ENCODE measurements at regions of chr5 and their contacts with region 1.

Region 1: DNA sequence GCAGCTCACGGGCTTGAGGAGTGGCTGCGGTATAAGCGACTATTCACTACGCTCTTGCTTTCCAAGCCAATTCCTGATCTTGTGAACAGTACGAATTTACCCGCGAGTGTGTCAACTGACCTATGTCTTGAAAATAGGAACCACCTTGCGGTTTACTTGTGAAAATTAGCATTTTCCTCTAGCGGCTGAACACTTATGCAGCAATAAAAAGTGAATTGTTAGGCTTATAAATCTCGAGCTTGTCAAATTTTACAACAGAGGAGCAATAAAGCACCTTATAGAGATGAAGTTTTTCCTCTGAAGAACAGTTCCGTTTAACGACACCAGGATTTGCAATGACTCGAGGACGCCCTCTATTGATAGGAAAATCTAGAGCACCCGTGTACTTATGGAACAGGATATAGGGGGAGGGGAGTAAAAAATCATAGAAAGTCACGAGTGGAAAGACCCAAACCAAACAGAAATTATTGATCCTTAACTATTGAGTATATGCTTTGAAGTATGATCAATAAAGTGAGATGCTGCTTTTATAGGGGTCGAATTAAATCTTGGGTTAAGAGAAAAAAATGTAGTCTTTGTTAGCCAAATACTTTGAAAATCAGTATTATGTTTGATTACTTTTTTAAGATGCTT is 2.0 kb upstream of the RGMB start:
- DNase-seq: peak in 1 of 2 donors; percentile 52
- H3K4me3 ChIP-seq: peak overlapping the region; percentile 55 to 89 (median 73)
- H3K27ac ChIP-seq: peak overlapping the region; percentile 79 to 82
- H3K4me1 ChIP-seq: peaks cover 0 to 13% of the 10 kb centered on the region in 2 donors
- H3K27me3 ChIP-seq: no peaks in the 10 kb centered on the region
- CTCF ChIP-seq: peak; percentile 88 to 92 (median 88)
- POLR2A ChIP-seq: no peak

Region 2: GRCh38 chr5:98750693-98751092 is 20.8 kb before region 1 on chr5:
- intact Hi-C with region 1: no loop called
- DNase-seq: no peak
- H3K4me3 ChIP-seq: no peak overlapping the region
- H3K27ac ChIP-seq: no peak overlapping the region
- H3K4me1 ChIP-seq: no peaks in the 10 kb centered on the region
- H3K27me3 ChIP-seq: no peaks in the 10 kb centered on the region
- CTCF ChIP-seq: peak in 1 of 3 donors; percentile 9
- POLR2A ChIP-seq: no peak

Region 3: DNA sequence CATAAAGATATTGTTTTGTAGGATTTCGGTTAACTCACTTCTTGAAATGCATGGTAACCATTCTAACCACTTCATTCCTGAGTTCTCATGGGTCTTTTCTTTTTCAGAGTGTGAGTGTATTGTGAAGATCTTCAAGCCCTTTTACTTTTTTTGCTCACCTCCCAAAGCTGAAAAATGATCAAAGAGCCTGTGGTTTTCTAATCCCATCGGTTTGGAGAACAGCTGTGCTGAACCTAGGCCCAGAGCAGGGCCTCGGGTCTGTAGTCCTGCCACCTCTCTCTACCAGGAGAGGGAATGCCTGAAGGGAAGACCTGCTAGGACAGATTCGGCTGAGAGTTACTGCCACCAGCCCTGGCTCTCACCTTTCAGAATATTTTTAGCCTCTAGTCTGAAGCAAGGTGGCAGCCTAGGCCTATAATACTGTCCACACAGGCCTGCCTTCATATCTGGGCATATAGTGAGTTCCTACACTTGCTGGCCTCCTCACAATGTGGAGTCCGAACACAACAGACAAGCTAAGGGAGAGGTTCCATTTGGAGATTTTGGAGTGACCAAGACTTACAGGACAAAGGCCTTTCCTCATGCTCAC is 15.7 kb after region 1 on chr5:
- intact Hi-C with region 1: loop called (anchors 1 kb)
- DNase-seq: no peak
- H3K4me3 ChIP-seq: peak overlapping the region in 1 of 3 donors; percentile 17
- H3K27ac ChIP-seq: peak overlapping the region; percentile 81 to 82
- H3K4me1 ChIP-seq: peaks cover 9 to 21% of the 10 kb centered on the region in 2 donors
- H3K27me3 ChIP-seq: no peaks in the 10 kb centered on the region
- CTCF ChIP-seq: no peak
- POLR2A ChIP-seq: no peak

Measured in breast epithelium (tissue), 4 donors.